Right lobe of liver (tissue), 6 donors: ENCODE measurements at regions of chr2 and their contacts with region 1.

Region 1: GRCh38 chr2:121722479-121722878 is 14.2 kb downstream of the NIFK start:
- DNase-seq: no peak
- ATAC-seq: peak in 1 of 4 donors; percentile 52
- H3K4me3 ChIP-seq: no peak overlapping the region
- H3K27ac ChIP-seq: no peak overlapping the region
- H3K4me1 ChIP-seq: no peaks in the 10 kb centered on the region
- H3K27me3 ChIP-seq: no peaks in the 10 kb centered on the region
- CTCF ChIP-seq: no peak
- POLR2A ChIP-seq: no peak

Region 2: GRCh38 chr2:121400201-121400600 is 322.3 kb before region 1 on chr2:
- intact Hi-C with region 1: loop called in 1 of 2 experiments (anchors 10 kb)
- DNase-seq: no peak
- ATAC-seq: no peak
- H3K4me3 ChIP-seq: no peak overlapping the region
- H3K27ac ChIP-seq: no peak overlapping the region
- H3K4me1 ChIP-seq: no peaks in the 10 kb centered on the region
- H3K27me3 ChIP-seq: no peaks in the 10 kb centered on the region
- CTCF ChIP-seq: no peak
- POLR2A ChIP-seq: no peak

Region 3: DNA sequence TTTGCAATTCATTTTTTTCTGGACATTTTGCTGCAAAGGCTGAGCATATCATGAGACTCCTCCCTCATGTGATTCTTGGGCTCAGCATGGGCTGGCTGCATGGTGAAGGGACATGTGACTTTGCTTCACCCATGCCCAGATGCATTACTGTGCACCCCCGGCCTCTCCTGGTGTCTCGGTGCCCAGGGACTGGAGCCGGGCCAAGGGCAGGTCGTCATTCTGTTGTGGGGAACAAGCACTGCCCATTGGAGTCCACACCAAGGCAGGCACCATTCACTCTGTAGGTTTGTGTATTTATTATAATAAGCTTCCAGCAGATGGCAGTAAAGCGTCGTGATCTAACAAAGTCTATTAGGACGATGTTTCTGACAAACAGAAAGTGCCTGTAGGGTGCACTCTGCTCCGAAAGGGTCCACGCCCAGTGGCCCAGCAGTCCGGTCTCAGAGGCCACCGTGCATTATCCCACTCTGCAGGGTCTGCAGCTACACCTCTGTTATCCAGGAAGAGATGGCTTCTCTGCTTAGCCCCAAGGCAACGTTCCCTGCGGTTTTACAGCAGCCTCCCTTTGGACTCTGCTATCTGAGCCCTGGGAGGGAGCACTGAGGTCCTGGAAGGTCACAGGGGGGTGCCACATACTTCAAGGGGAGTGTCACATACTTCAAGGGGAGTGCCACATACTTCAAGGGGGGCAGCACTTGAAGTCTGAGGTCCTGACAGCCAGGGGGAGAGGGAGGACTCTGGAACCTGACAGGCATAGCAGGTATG is 252.6 kb after region 1 on chr2:
- intact Hi-C with region 1: no loop called
- DNase-seq: peak; percentile 35 to 61 (median 55)
- ATAC-seq: peak; percentile 92 to 98 (median 96)
- H3K4me3 ChIP-seq: peak overlapping the region in 2 of 3 donors; percentile 22 to 25
- H3K27ac ChIP-seq: no peak overlapping the region
- H3K4me1 ChIP-seq: no peaks in the 10 kb centered on the region
- H3K27me3 ChIP-seq: no peaks in the 10 kb centered on the region
- CTCF ChIP-seq: peak; percentile 60 to 68 (median 62)
- POLR2A ChIP-seq: no peak